ENCODE measurements at regions of chr22 and their contacts with region 1.

Region 1: DNA sequence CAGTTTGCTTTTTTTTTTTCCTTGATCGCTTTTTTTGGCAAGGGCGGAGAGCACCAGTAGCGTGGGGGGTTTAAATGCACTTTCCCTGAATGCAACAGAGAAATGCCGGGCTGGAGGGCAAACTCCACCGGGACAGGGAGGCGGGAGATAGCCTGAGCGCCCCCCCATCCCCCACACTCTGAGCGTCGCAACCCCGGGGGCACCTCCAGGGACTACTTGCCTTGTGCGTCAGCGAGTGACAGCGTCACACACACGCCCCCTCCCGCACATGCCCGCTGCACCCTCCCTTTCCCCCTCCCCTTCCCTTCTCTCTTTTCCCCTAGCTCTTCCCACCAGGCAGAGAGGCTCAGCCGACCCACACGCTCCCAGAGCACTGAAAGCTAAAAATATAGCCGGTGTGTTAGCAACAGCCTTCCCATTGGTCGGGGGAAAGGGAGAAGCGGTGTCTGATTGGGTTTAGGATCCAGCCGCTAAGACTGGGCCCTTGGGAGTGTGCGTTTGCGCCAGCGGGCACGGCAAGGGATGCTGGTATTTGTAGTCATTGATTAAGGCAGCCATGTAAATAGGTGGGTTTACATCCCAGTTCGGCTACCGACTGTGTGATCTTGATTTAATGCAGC is 1.7 kb upstream of the TOB2 start:
- DNase-seq: peak; percentile 90
- CTCF ChIP-seq: no peak

Region 2: GRCh38 chr22:41381329-41382097 is 66.8 kb before region 1 on chr22 and contains the start of gene TEF:
- CTCF ChIA-PET with region 1: interaction called, 3 read pairs
- POLR2A ChIA-PET with region 1: interaction called, 11 read pairs
- DNase-seq: peak; percentile 99
- CTCF ChIP-seq: no peak

Region 3: GRCh38 chr22:41394012-41394356 is 54.3 kb before region 1 on chr22:
- CTCF ChIA-PET with region 1: no interaction called
- POLR2A ChIA-PET with region 1: no interaction called
- DNase-seq: no peak
- CTCF ChIP-seq: no peak

Region 4: GRCh38 chr22:41436322-41437113 is 11.8 kb before region 1 on chr22:
- CTCF ChIA-PET with region 1: no interaction called
- POLR2A ChIA-PET with region 1: interaction called, 12 read pairs
- DNase-seq: no peak
- CTCF ChIP-seq: no peak

Region 5: DNA sequence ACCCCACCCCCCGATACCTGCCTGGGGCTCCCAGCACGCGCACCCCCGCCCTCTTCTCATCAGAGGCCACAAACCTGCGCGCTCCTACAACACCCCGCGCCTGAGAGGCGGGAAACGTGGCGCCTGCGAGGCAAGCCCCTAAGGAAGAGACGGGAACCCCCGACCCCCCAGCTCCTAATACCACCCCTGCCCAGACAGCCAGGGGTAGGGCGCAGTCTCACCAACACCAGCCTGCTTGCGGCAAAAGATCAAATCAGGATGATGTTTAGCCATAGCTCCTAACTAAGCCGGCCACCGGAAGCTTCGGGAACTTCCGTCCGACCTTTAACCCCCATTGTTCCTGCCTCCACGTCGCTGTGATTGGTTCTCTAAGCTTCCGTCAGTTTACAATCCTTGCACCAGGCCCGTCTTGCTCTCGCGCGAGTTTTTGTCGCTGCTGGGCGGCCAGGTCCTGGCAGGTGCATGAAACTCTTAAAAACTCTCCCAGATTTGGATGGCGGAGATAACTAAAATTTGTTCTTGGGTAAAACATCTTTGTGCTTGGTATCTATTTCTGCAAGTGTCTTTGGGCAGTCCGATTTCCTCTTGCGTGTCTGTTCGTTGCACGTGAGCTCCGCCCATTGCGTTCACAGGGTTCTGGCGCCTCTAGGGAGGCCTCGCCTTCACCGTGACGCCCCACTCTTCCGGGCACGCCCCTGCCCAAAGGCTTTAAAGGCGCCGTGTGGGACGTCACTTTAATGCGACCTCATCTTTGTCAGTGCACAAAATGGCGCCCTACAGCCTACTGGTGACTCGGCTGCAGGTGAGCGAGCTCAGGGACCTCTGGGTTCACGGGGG is 20.3 kb after region 1 on chr22 and contains the starts of genes ACO2 and PHF5A:
- CTCF ChIA-PET with region 1: interaction called, 3 read pairs
- POLR2A ChIA-PET with region 1: interaction called, 42 read pairs
- DNase-seq: peak; percentile 96
- CTCF ChIP-seq: no peak

Region 6: DNA sequence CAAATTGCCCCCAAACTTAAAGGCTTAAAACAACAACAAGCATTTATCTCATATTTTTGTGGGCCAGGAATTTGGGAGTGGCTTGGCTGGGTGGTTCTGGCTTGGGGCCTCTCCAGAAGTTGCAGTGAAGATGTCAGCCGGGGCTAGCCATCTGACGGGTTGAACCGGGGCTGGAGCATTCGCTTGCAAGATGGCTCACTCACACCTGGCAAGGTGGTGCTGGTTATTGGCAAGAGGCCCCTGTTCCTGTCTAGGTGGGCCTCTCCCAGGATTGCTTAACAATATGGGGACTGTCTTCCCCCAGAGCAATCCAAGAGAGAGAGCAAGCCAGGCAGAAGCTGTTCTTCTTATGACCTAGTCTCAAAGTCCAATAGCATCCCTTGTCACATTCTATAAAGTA is 50.1 kb after region 1 on chr22:
- CTCF ChIA-PET with region 1: no interaction called
- POLR2A ChIA-PET with region 1: no interaction called
- DNase-seq: no peak
- CTCF ChIP-seq: no peak

Measured in GM10248 (cell line).